GM23248 (cell line): ENCODE measurements at regions of chr7 and their contacts with region 1.

Region 1: DNA sequence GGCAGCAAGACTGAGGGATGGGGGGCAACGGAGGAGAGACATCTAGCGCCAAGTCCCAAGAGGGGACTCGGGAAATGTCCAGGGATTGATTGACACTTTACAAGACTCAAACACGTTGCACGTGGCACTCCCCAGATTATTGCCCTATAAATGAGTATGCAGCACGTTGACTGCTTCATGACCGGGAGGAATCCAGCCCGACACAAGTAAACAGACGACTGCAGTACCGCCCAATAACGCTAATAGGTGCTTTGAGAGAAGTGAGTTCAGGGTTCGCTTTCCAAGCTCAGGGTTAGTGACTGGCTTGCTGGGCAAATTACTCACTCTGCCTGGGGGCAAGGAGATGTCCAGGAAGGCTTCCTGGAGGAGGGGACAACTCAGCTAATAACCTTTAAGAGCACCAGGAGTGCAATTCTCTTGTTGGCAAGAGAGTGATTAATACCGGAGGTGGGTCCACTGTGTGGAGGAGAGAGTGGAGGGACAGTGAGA is 73.3 kb upstream of the MYL10 start:
- DNase-seq: peak; percentile 39
- H3K4me3 ChIP-seq: no peak overlapping the region
- H3K27ac ChIP-seq: no peak overlapping the region
- H3K4me1 ChIP-seq: no peaks in the 10 kb centered on the region
- H3K27me3 ChIP-seq: peaks cover 11% of the 10 kb centered on the region

Region 2: DNA sequence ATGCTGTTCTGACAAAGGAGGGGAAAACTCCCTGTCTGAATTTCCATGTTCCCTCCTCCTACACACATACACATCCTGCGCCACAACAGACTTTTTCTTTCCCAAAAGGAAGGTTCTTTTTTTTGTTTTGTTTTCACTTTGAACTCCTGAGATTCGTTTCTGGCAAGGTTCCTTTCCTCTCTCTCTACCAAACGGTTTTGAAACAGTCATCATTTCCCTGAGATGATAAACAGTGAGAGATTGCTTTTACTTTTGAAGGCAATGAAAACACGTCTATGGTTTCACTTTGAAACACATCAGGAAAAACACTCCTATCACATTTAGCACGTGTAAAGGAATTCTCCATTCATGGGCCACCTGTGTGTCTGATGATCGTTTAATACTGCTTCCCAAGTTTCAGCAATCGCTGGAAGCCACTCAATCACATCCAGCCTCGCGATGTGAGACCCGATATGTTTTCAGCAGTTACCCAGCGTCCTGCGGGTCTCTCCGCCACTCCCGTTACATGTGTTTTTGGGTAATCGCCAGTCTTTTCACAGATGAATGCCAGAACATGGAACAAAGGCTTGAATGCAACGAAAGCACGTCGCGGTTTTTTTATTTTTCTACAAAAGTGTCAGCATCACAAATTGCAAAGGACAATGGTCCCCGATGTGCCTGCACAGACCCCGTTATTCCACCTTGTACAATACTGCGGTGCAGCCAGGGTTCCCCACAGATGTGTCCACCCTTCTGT is 52.2 kb after region 1 on chr7:
- in situ Hi-C with region 1: no loop called
- DNase-seq: peak; percentile 49
- H3K4me3 ChIP-seq: peak overlapping the region; percentile 68
- H3K27ac ChIP-seq: no peak overlapping the region
- H3K4me1 ChIP-seq: no peaks in the 10 kb centered on the region
- H3K27me3 ChIP-seq: peaks cover 62% of the 10 kb centered on the region

Region 3: DNA sequence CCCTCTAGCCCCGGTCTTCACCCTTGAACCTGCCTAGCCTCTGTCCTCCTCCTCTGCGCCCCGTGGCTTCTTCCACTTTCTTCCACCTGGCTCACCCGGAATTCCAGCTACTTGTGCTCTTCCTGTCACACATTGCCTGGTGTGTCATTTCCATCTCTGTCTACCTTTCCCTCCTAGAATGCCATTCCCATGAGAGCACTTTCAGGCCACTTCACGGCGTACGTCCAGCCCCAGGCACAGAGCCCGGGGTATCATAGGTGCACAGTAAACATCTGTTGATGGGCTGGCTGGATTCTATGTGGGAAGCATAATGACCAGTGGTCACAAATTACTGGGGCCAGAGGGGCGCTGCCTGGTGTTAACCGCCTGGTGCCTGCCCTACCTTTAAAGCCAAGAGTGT is 276.3 kb after region 1 on chr7:
- in situ Hi-C with region 1: no loop called
- DNase-seq: no peak
- H3K4me3 ChIP-seq: no peak overlapping the region
- H3K27ac ChIP-seq: no peak overlapping the region
- H3K4me1 ChIP-seq: no peaks in the 10 kb centered on the region
- H3K27me3 ChIP-seq: no peaks in the 10 kb centered on the region

Region 4: GRCh38 chr7:102248456-102249395 is 546.3 kb after region 1 on chr7:
- in situ Hi-C with region 1: loop called (anchors 10 kb)
- DNase-seq: no peak
- H3K4me3 ChIP-seq: no peak overlapping the region
- H3K27ac ChIP-seq: no peak overlapping the region
- H3K4me1 ChIP-seq: no peaks in the 10 kb centered on the region
- H3K27me3 ChIP-seq: no peaks in the 10 kb centered on the region

Region 5: DNA sequence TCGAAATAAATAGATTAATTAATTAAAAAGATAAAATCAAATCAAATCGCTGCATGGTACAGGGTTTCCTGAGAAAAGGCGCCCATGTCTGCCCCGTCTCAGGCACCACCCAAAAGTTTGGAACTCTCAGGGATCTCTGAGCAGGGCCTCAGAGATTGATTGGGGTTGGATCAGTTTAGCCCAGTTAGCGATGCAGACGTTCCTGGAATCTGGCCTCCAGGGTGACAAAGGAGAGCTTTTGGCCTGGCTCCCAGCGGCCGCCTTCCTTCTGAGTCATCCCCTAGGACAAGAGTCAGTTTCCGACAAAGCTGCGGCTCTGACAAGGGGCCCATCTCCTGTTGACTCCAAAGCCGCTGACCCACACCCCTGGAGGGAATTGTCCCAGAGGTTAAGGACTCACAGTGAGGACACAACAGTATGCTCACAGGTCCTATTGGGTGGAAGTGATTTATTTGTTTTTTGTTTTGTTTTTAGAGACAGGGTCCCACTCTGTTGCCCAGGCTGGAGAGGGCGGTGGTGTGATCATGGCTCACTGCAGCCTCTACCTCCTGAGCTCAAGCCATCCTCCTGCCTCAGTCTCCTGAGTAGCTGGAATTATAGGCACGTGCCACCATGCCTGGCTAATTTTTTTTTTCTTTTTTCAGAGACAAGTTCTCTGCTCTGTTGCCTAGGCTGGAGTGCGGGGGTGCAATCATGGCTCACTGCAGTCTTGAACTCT is 737.8 kb after region 1 on chr7:
- in situ Hi-C with region 1: no loop called
- DNase-seq: peak; percentile 78
- H3K4me3 ChIP-seq: no peak overlapping the region
- H3K27ac ChIP-seq: no peak overlapping the region
- H3K4me1 ChIP-seq: 0 out of 2 replicates have a peak, but pooled peaks cover 8% of the 10 kb centered on the region
- H3K27me3 ChIP-seq: no peaks in the 10 kb centered on the region